Prostate gland (tissue), 2 donors: ENCODE measurements at regions of chr4 and their contacts with region 1.

Region 1: DNA sequence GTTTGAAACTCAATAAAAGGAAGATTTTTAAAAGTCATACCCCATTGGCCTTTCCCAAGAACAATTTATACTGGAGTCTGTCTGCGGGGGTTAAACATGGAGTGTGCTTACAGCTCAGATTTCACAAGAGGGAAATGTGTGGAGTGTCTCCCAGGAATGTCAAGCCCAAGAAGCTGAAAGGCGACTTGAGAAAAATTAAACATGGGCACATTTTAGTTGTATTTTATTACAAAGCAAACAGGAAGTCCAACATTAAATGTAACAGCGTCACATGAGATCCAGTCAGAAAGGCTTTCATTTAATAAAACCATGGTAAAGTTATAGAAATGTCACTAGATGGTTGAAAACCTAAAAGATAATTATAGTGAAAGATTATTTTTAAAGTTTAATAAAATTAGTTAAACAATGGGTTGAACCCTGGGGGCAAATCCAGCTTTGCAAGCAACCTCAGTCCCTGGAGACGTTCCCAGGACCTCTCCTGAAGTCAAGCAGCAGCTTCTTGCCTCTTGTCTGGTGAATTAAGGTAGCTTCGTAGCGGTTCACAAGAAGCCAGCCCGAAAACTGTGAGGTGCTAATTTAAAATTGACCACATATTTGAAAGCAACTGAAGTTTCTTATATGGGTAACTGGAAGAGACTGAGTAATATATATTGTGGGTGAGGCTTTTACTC is 168.4 kb upstream of the EDNRA start:
- DNase-seq: peak; percentile 14
- H3K4me3 ChIP-seq: no peak overlapping the region
- H3K27ac ChIP-seq: peak overlapping the region; percentile 38 to 39
- H3K4me1 ChIP-seq: no peaks in the 10 kb centered on the region
- H3K27me3 ChIP-seq: no peaks in the 10 kb centered on the region
- CTCF ChIP-seq: no peak
- POLR2A ChIP-seq: no peak

Region 2: GRCh38 chr4:146844761-146845160 is 467.8 kb before region 1 on chr4:
- intact Hi-C with region 1: no loop called
- DNase-seq: no peak
- H3K4me3 ChIP-seq: no peak overlapping the region
- H3K27ac ChIP-seq: no peak overlapping the region
- H3K4me1 ChIP-seq: no peaks in the 10 kb centered on the region
- H3K27me3 ChIP-seq: no peaks in the 10 kb centered on the region
- CTCF ChIP-seq: no peak
- POLR2A ChIP-seq: no peak

Region 3: DNA sequence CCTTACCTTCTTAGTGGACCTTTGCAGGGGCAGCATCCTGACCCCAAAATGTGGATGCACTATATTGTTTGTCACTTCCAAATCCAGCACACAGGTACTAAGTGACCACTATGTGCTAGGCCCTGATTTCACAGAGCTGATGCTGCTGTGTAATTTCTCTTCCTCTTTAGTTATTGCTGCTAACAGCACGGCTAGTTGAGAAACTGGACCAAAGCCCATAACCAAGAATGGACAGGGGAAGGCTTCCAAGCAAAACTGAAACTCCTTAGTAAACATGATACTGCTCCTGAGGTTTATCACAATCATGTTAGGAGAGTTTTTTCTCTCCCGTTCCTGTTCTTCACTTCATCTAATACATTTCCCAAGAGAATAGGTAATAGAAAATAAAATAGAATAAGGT is 194.0 kb before region 1 on chr4:
- intact Hi-C with region 1: loop called (anchors 10 kb)
- DNase-seq: peak; percentile 52
- H3K4me3 ChIP-seq: no peak overlapping the region
- H3K27ac ChIP-seq: peak overlapping the region; percentile 20 to 69
- H3K4me1 ChIP-seq: peaks cover 7% of the 10 kb centered on the region
- H3K27me3 ChIP-seq: no peaks in the 10 kb centered on the region
- CTCF ChIP-seq: no peak
- POLR2A ChIP-seq: no peak

Region 4: DNA sequence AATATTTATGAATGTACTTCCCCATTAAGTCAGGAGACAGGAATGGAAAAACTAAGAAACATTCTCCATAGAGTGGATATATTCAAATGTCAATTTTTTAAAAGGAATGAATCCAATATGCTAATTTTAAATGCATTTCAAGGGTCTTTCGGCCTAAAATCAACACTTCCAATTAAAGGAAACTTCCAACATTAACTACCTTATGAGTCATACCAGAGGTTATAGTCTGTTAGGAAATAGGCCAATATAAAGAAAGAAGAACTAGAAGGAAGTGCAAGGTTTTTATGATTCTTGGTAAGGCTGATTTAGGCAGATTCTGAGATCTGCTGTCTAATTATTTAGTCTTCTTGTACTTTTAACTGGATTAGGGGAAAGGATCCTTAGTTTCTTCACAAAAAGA is 91.7 kb before region 1 on chr4:
- intact Hi-C with region 1: loop called (anchors 10 kb)
- DNase-seq: no peak
- H3K4me3 ChIP-seq: no peak overlapping the region
- H3K27ac ChIP-seq: no peak overlapping the region
- H3K4me1 ChIP-seq: no peaks in the 10 kb centered on the region
- H3K27me3 ChIP-seq: no peaks in the 10 kb centered on the region
- CTCF ChIP-seq: no peak
- POLR2A ChIP-seq: no peak

Region 5: DNA sequence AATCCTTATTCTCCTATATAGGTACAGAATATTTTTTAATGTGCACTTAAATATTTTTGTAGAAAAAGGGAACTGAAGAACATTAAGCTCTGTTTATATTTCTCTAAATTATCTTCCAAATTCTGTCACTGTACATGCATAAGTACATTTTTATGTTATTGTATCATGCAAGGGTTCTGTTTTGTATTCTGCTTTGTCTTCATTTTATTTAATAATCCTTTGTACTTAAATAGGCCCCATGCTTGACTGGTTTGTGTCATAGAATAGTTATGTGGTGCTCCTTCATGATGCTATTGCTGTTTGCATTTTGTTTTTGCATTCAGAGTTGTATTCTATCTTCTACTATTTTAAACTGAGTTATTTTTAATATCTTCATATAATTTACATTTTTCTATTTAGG is 56.4 kb after region 1 on chr4:
- intact Hi-C with region 1: loop called (anchors 5 kb)
- DNase-seq: no peak
- H3K4me3 ChIP-seq: no peak overlapping the region
- H3K27ac ChIP-seq: no peak overlapping the region
- H3K4me1 ChIP-seq: no peaks in the 10 kb centered on the region
- H3K27me3 ChIP-seq: no peaks in the 10 kb centered on the region
- CTCF ChIP-seq: no peak
- POLR2A ChIP-seq: no peak